ENCODE measurements at regions of chr11 and their contacts with region 1.

Region 1: DNA sequence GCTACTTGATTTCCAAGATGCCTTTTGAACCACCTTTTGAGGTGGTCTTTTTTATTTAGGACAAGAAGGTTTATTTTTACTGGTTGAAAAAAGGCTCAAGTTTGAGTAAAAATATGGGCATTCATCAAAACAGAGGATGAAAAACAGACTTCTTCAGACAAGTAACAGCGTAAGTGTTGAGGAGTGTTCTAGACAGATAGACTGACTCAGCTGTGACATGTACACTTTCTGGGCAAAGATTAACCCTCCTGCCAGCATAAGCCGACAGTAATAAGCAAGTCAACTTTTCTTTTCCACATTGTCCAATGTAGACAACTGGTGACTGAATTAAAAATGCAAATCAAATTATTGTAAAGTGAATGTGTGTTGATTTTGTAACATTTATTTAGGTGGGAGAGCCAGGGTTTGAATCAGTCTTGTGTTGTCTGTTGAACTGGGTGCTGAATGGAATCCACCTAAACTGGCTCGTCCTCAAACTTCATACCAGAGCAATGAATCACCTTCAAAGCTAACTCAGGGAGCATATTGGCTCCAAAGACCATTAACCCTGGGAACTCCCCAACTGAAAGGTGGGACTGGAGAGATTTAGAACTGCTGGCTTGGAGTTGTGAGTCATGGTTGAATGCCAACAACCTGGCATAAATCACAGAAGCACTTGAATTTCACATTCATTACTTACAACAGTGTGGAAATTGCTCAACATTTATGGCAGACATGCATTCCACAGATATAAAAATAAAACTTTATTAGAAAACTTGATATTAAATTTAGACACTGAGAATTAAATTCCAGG is 377.0 kb downstream of the ETS1 start:
- DNase-seq: peak; percentile 100
- ATAC-seq: peak; percentile 62
- H3K4me3 ChIP-seq: peak overlapping the region; percentile 42
- H3K27ac ChIP-seq: peak overlapping the region; percentile 97
- H3K4me1 ChIP-seq: peaks cover 51% of the 10 kb centered on the region
- H3K27me3 ChIP-seq: no peaks in the 10 kb centered on the region
- CTCF ChIP-seq: no peak

Region 2: GRCh38 chr11:128180446-128181087 is 29.8 kb before region 1 on chr11:
- CTCF ChIA-PET with region 1: no interaction called
- POLR2A ChIA-PET with region 1: no interaction called
- intact Hi-C with region 1: loop called (anchors 1 kb)
- DNase-seq: peak; percentile 97
- ATAC-seq: peak; percentile 93
- H3K4me3 ChIP-seq: no peak overlapping the region
- H3K27ac ChIP-seq: peak overlapping the region; percentile 52
- H3K4me1 ChIP-seq: peaks cover 30% of the 10 kb centered on the region
- H3K27me3 ChIP-seq: no peaks in the 10 kb centered on the region
- CTCF ChIP-seq: no peak

Region 3: GRCh38 chr11:128290106-128290840 is 79.9 kb after region 1 on chr11:
- CTCF ChIA-PET with region 1: no interaction called
- POLR2A ChIA-PET with region 1: interaction called, 4 read pairs
- intact Hi-C with region 1: loop called (anchors 1 kb)
- DNase-seq: peak; percentile 94
- ATAC-seq: peak; percentile 82
- H3K4me3 ChIP-seq: no peak overlapping the region
- H3K27ac ChIP-seq: peak overlapping the region; percentile 53
- H3K4me1 ChIP-seq: peaks cover 39% of the 10 kb centered on the region
- H3K27me3 ChIP-seq: no peaks in the 10 kb centered on the region
- CTCF ChIP-seq: peak; percentile 97

Region 4: GRCh38 chr11:128311742-128312719 is 101.7 kb after region 1 on chr11:
- CTCF ChIA-PET with region 1: no interaction called
- POLR2A ChIA-PET with region 1: no interaction called
- intact Hi-C with region 1: no loop called
- DNase-seq: no peak
- ATAC-seq: no peak
- H3K4me3 ChIP-seq: no peak overlapping the region
- H3K27ac ChIP-seq: no peak overlapping the region
- H3K4me1 ChIP-seq: no peaks in the 10 kb centered on the region
- H3K27me3 ChIP-seq: no peaks in the 10 kb centered on the region
- CTCF ChIP-seq: no peak

Region 5: DNA sequence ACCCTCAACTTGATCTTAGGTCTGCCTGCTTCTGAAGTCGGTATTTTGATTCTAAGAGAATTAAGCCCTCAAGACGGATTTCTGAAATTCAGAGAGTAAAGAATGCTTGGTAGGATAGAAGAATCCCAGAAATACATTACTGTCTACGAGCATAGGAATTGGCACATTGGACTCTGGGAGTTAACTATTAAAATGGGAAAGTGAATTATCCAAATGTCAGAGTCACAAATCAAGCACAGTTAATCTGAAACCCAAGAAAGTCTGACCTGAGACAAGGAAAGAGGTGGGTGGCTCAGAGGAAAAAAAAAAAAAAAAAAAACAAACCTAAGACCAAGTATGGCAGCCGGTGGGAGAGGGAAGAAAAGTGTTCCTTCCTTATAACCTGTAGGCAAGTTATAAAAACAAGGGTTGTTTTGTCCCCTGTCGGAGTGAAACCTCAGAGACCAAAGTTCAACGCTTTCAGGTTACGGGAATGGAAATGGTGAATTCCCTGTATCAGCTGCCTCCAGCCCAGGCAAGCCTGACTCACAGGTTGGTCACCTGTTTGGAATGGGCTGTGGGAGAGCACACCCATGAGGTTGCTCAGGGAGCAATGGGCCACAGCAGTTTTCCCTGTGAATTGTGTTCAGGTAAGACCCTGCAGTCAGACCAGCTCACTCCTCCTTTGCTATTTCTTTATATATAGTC is 238.0 kb after region 1 on chr11:
- CTCF ChIA-PET with region 1: no interaction called
- POLR2A ChIA-PET with region 1: no interaction called
- intact Hi-C with region 1: loop called (anchors 1 kb)
- DNase-seq: peak; percentile 100
- ATAC-seq: peak; percentile 97
- H3K4me3 ChIP-seq: peak overlapping the region; percentile 43; the same call in 1 of the 2 replicates
- H3K27ac ChIP-seq: peak overlapping the region; percentile 91
- H3K4me1 ChIP-seq: peaks cover 31% of the 10 kb centered on the region
- H3K27me3 ChIP-seq: no peaks in the 10 kb centered on the region
- CTCF ChIP-seq: peak; percentile 65

Region 6: GRCh38 chr11:128482512-128483191 is 272.3 kb after region 1 on chr11:
- CTCF ChIA-PET with region 1: no interaction called
- POLR2A ChIA-PET with region 1: no interaction called
- intact Hi-C with region 1: no loop called
- DNase-seq: no peak
- ATAC-seq: no peak
- H3K4me3 ChIP-seq: no peak overlapping the region
- H3K27ac ChIP-seq: no peak overlapping the region
- H3K4me1 ChIP-seq: no peaks in the 10 kb centered on the region
- H3K27me3 ChIP-seq: no peaks in the 10 kb centered on the region
- CTCF ChIP-seq: no peak

Region 7: GRCh38 chr11:128528294-128528693 is 317.9 kb after region 1 on chr11:
- CTCF ChIA-PET with region 1: no interaction called
- POLR2A ChIA-PET with region 1: no interaction called
- intact Hi-C with region 1: no loop called
- DNase-seq: no peak
- ATAC-seq: no peak
- H3K4me3 ChIP-seq: no peak overlapping the region
- H3K27ac ChIP-seq: no peak overlapping the region
- H3K4me1 ChIP-seq: peaks cover 51% of the 10 kb centered on the region
- H3K27me3 ChIP-seq: no peaks in the 10 kb centered on the region
- CTCF ChIP-seq: no peak

Region 8: GRCh38 chr11:128630367-128631230 is 420.3 kb after region 1 on chr11:
- CTCF ChIA-PET with region 1: interaction called, 3 read pairs
- POLR2A ChIA-PET with region 1: no interaction called
- intact Hi-C with region 1: loop called (anchors 1 kb)
- DNase-seq: peak; percentile 92
- ATAC-seq: peak; percentile 94
- H3K4me3 ChIP-seq: no peak overlapping the region; the same call in 1 of the 2 replicates
- H3K27ac ChIP-seq: no peak overlapping the region
- H3K4me1 ChIP-seq: peaks cover 17% of the 10 kb centered on the region
- H3K27me3 ChIP-seq: no peaks in the 10 kb centered on the region
- CTCF ChIP-seq: peak; percentile 98

Measured in PC-3 (cell line).